Transverse colon (tissue), 4 donors: ENCODE measurements at regions of chr10 and their contacts with region 1.

Region 1: DNA sequence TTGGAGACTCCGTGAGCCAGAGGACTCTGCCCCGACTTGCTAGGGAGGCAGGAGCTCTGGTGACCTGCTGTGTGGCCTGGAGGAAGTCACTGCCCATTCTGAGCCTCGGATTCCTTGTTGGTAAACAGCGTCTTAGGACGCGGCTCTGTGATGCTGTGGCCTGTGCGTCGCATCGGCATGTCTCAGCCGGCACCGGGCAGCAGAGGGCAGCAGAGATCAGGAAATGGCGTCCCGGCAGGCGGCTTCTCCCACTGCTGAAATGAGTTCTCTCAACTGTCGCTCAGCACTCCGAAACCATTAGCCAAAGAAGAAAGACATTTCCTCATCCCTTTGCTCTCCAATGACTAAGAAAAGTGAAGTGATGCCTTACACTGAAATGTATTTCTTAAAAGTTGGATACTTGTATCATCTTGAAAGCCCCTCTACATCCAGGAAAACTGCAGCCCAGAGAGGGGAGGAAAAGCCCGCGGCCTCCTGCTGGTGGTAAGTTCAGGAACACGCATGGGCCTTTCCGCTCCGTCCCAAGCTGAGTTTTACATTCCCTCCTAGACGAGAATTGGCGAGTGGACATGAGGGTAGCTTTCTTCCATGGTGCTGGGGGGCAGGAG is 91.7 kb downstream of the WDR11 start:
- DNase-seq: peak; percentile 83
- H3K4me3 ChIP-seq: no peak overlapping the region
- H3K27ac ChIP-seq: no peak overlapping the region
- H3K4me1 ChIP-seq: peaks cover 0 to 7% (median 7%) of the 10 kb centered on the region in 4 donors
- H3K27me3 ChIP-seq: peaks cover 3% of the 10 kb centered on the region
- CTCF ChIP-seq: peak; percentile 84 to 91 (median 89)
- EP300 ChIP-seq: no peak
- POLR2A ChIP-seq: no peak

Region 2: DNA sequence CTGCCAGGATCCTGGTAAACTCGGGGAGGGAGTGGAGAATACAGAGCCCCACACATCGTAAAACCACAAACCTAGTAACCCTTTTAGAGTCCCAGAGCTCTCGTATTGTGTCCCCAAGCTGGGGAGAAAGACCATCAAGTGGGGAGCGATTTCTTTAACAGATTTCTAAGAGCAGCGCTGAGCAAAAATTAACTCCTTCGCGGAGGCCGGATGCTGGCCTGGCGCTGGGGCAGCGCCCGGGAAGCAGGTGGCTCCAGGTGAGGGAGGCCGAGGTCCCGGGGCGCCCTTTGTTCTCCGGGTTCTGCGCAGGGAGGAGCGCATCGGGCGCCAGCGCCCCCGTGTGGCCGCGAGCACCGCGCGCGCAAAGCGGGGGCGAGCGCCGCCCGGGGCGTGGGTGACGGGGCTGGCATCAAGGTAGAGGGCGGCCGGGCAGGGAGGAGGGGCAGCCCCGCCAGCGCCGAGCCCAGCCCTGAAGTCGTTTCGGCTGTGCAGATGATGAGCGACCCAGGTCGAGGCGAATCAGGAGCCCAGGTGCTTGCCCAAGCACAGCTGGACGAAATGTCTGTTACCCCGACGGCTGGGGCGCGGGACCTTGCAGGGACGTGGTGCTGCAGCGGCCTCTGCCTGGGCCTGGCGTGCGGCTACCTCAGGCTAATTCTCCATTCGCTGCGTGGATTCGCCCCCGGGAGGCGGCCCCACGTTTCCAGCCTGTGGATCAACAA is 665.7 kb after region 1 on chr10:
- in situ Hi-C with region 1: loop called in 2 of 4 experiments (anchors 10 kb)
- intact Hi-C with region 1: loop called (anchors 2 kb)
- DNase-seq: peak; percentile 75
- H3K4me3 ChIP-seq: peak overlapping the region; percentile 17 to 28 (median 20)
- H3K27ac ChIP-seq: peak overlapping the region in 1 of 4 donors; percentile 38
- H3K4me1 ChIP-seq: peaks cover 0 to 7% (median 2%) of the 10 kb centered on the region in 4 donors
- H3K27me3 ChIP-seq: no peaks in the 10 kb centered on the region
- CTCF ChIP-seq: peak; percentile 57 to 94 (median 91)
- EP300 ChIP-seq: no peak
- POLR2A ChIP-seq: no peak

Region 3: DNA sequence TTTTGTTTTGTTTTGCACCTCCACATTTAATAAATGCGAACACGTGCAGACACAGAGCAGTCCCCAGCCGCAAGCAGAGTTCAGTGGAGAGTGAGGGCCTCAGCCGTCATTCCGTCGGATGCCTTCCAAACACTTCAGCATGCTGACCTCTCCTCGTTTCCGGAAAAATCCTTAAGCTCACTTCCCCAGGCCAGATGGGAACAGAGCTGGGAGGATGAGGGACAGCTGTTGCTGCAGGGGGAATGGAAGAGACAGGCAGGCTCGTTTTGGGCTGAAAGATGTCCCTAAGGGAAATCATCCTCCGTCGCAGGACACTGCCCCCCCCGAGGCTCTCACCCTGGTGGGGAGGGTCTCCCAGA is 672.5 kb after region 1 on chr10:
- in situ Hi-C with region 1: loop called in 1 of 4 experiments (anchors 10 kb)
- intact Hi-C with region 1: no loop called
- DNase-seq: peak; percentile 15
- H3K4me3 ChIP-seq: no peak overlapping the region
- H3K27ac ChIP-seq: peak overlapping the region in 2 of 4 donors; percentile 5 to 41
- H3K4me1 ChIP-seq: no peaks in the 10 kb centered on the region
- H3K27me3 ChIP-seq: no peaks in the 10 kb centered on the region
- CTCF ChIP-seq: no peak
- EP300 ChIP-seq: no peak
- POLR2A ChIP-seq: no peak

Region 4: DNA sequence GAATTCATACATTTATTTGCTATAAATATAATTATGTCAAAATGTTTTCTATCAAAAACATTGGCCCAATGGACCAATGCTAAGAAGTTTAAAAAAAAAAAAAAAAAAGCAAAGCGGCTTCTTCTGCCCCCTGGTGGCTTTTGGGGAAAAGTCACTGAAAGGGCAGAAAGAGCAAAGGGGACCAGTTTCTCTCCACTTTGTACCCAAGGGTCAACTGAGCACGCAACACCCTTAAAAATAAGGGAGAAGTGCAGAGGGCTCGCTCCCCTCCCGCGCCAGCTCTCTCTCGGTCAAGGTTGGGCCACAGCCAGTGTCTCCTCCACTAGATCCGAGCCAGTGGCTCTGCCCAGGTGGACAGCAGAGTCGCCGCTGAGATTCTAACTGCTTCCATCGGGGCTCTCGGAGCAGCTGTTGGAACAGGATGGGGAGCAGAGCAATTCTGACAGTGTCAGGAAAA is 791.7 kb after region 1 on chr10:
- in situ Hi-C with region 1: loop called (anchors 5 to 10 kb)
- intact Hi-C with region 1: loop called (anchors 2 kb)
- DNase-seq: no peak
- H3K4me3 ChIP-seq: no peak overlapping the region
- H3K27ac ChIP-seq: no peak overlapping the region
- H3K4me1 ChIP-seq: peaks cover 0 to 3% (median 1%) of the 10 kb centered on the region in 4 donors
- H3K27me3 ChIP-seq: peaks cover 13% of the 10 kb centered on the region
- CTCF ChIP-seq: peak; percentile 64 to 76 (median 69)
- EP300 ChIP-seq: no peak
- POLR2A ChIP-seq: no peak

Region 5: DNA sequence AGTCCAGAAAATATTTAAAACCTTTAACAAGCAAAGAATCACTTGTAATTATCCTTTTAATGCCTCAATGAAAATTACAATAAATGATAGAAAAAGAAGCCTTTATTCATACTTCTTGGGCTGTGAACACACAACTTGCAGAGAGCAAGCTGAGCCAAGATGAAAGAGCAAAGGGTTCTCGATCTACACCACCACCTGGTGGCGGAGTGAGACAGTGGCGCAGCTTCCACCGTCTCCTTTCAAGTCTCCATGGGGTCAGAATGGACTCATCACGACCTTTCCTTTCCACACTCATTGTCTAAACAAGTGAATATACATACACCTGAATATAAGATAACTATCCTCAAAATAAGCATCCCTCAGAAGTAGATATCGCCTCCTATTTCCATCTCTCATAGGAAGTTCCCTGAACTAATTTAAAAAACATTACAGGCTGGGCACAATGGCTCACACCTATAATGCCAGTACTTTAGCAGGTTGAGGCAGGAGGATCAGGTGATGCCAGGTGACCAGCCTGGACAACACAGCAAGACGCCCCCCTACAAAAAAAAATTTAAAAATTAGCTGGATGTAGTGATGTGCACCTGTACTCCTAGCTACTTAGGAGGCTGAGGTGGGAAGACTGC is 944.2 kb after region 1 on chr10:
- in situ Hi-C with region 1: loop called (anchors 10 to 25 kb)
- intact Hi-C with region 1: no loop called
- DNase-seq: peak; percentile 55
- H3K4me3 ChIP-seq: no peak overlapping the region
- H3K27ac ChIP-seq: no peak overlapping the region
- H3K4me1 ChIP-seq: no peaks in the 10 kb centered on the region
- H3K27me3 ChIP-seq: no peaks in the 10 kb centered on the region
- CTCF ChIP-seq: peak; percentile 74 to 81 (median 76)
- EP300 ChIP-seq: no peak
- POLR2A ChIP-seq: no peak